Activated T-helper 2 cell treated with anti-CD3 and anti-CD28 coated beads, Interferon-gamma antibody, Interleukin-2, Interleukin-4, amounts not matched to agents 10 μg/mL and 5 μg/mL and 100 μg/mL, durations not matched to agents 14 hours and 24 hours and 36 hours (primary cell): ENCODE measurements at regions of chr4 and their contacts with region 1.

Region 1: DNA sequence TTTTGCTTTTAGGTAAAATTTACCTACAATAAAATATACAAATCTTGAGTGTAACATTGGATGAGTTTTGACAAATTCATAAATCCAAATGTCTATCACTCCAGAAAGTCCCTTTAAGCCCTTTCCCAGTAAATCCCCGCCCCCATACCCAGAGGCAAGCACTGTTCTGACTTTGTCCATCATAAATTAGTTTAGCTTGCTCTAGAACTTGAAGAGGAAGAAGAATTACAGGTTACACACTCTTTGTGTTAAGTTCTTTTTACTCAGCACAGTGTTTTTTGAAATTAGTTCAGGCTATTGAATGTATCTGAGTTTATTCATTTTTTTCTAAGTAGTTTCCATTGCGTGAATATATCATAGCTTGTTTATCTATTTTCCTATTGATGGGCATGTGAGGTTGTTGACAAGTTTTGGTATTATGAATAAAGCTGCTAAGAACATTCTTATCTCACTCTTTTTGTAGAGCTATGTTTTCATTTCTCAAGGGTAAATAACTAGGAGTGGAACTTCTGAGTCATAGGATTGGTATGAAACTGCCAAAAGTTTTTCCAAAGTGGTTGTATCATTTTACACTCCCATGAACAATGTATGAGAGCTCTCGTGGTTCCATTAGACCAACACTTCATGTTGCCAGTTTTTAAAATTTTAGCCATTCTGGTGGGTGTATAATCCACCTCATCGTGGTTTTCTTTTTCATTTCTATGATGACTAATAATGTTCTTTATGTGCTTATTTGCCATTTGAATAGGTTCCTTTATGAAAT is 22.4 kb upstream of the HPSE start:
- DNase-seq: no peak
- H3K4me3 Mint-ChIP-seq: no peak overlapping the region
- H3K27ac Mint-ChIP-seq: peak overlapping the region; percentile 85
- H3K4me1 Mint-ChIP-seq: peaks cover 24% of the 10 kb centered on the region
- H3K27me3 Mint-ChIP-seq: no peaks in the 10 kb centered on the region

Region 2: GRCh38 chr4:82890901-82891706 is 466.0 kb before region 1 on chr4 and contains the start of gene SEC31A:
- intact Hi-C with region 1: no loop called
- DNase-seq: peak; percentile 96
- H3K4me3 Mint-ChIP-seq: peak within 1 kb of the TSS; percentile 89
- H3K27ac Mint-ChIP-seq: peak within 1 kb of the TSS; percentile 91
- H3K4me1 Mint-ChIP-seq: peaks cover 43% of the 10 kb centered on the region
- H3K27me3 Mint-ChIP-seq: no peaks in the 10 kb centered on the region
- total RNA-seq, gene SEC31A: 138 and 142 TPM in 2 replicates

Region 3: DNA sequence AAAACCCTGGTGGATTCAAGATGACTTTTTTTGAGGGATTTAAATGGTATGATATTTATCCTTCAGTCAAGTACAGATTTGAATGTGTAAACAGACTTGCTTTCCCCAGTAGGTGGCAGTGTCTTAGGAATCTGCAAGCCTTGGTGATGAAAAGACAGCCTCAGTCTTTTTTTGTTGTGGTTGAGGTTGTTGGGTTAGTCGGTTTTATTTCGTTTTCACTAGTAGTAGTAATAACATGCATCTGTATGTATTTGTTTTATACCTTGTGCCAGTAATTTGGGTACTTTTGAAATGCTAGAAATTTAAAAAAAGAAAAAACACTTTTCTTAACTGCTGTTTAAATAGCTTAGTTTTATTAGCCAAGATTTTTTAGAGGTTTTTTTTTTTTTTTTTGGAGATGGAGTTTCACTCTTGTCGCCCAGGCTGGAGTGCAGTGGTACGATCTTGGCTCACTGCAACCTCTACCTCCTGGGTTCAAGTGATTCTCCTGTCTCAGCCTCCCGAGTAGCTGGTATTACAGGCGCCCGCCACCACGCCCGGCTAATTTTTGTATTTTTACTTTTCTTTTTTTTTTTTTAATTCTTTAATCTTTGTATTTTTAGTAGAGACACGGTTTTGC is 282.9 kb before region 1 on chr4:
- intact Hi-C with region 1: loop called (anchors 10 kb)
- DNase-seq: peak; percentile 62
- H3K4me3 Mint-ChIP-seq: no peak overlapping the region
- H3K27ac Mint-ChIP-seq: no peak overlapping the region
- H3K4me1 Mint-ChIP-seq: peaks cover 26% of the 10 kb centered on the region
- H3K27me3 Mint-ChIP-seq: no peaks in the 10 kb centered on the region

Region 4: GRCh38 chr4:83231620-83232076 is 125.4 kb before region 1 on chr4:
- intact Hi-C with region 1: loop called (anchors 1 kb)
- DNase-seq: peak; percentile 60
- H3K4me3 Mint-ChIP-seq: no peak overlapping the region
- H3K27ac Mint-ChIP-seq: peak overlapping the region; percentile 2
- H3K4me1 Mint-ChIP-seq: peaks cover 54% of the 10 kb centered on the region
- H3K27me3 Mint-ChIP-seq: peaks cover 33% of the 10 kb centered on the region

Region 5: GRCh38 chr4:83284193-83285054 is 72.7 kb before region 1 on chr4 and contains the start of gene COQ2:
- intact Hi-C with region 1: loop called (anchors 1 kb)
- DNase-seq: peak; percentile 91
- H3K4me3 Mint-ChIP-seq: peak within 1 kb of the TSS; percentile 90
- H3K27ac Mint-ChIP-seq: peak within 1 kb of the TSS; percentile 95
- H3K4me1 Mint-ChIP-seq: peaks cover 45% of the 10 kb centered on the region
- H3K27me3 Mint-ChIP-seq: peaks cover 2% of the 10 kb centered on the region
- total RNA-seq, gene COQ2: 19.5 and 20.6 TPM in 2 replicates

Region 6: DNA sequence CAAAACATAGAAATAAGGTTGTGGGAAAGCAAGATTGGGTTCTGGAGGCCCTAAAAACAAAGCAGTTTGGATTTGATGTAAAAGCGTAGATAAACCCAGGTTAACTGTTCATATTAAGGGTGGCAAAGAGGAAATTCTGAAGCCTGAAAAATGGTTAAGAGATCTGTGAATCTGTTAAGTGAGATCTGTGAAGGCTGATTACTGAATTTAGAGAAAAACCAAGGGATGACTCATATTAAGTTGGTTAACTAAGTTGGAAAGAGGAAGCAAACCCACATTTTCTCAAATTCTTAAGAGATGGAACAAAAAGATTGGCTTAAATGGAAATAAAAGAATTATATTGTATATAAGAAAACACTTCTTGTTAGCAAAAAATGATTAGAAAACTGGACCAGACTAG is 201.6 kb after region 1 on chr4:
- intact Hi-C with region 1: loop called (anchors 2 kb)
- DNase-seq: no peak
- H3K4me3 Mint-ChIP-seq: peak overlapping the region; percentile 2
- H3K27ac Mint-ChIP-seq: peak overlapping the region; percentile 58
- H3K4me1 Mint-ChIP-seq: peaks cover 56% of the 10 kb centered on the region
- H3K27me3 Mint-ChIP-seq: peaks cover 13% of the 10 kb centered on the region